ENCODE measurements at regions of chr14 and their contacts with region 1.

Region 1: DNA sequence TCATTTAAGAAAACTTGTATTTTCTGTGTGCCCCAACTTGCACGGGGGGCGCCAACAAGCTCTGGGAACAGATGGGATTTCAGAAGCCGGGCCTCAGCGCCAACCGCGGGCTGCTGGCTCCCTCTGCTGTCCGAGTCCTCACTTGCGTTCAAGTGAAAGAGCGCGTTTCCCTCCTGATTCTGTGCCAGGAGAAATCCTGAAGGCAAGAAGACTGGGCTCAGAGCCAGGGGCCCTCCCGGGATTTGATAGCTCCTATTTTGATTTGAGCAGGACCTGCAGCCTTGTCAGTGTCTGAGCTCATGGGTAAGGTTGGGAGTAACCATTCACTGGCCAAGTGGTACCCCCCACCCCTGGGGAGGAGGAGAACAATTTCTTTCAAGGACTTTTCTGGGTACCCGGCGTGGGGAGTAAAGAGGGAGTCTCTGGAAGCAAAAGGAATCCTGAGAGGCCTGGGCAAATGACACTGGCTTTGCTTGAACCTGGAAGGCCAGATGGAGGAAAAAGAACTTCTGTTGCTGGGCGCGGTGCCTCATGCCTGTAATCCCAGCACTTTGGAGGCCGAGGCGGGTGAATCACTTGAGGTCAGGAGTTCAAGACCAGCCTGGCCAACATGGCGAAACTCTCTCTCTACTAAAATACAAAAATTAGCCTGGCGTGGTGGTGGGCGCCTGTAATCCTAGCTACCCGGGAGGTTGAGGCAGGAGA is 179.0 kb upstream of the RGS6 start:
- DNase-seq: peak; percentile 26
- H3K4me3 ChIP-seq: no peak overlapping the region
- CTCF ChIP-seq: peak; percentile 91

Region 2: GRCh38 chr14:71103662-71104484 is 649.4 kb before region 1 on chr14:
- CTCF ChIA-PET with region 1: interaction called, 48 read pairs
- POLR2A ChIA-PET with region 1: no interaction called
- DNase-seq: no peak
- H3K4me3 ChIP-seq: no peak overlapping the region
- CTCF ChIP-seq: peak; percentile 66

Region 3: DNA sequence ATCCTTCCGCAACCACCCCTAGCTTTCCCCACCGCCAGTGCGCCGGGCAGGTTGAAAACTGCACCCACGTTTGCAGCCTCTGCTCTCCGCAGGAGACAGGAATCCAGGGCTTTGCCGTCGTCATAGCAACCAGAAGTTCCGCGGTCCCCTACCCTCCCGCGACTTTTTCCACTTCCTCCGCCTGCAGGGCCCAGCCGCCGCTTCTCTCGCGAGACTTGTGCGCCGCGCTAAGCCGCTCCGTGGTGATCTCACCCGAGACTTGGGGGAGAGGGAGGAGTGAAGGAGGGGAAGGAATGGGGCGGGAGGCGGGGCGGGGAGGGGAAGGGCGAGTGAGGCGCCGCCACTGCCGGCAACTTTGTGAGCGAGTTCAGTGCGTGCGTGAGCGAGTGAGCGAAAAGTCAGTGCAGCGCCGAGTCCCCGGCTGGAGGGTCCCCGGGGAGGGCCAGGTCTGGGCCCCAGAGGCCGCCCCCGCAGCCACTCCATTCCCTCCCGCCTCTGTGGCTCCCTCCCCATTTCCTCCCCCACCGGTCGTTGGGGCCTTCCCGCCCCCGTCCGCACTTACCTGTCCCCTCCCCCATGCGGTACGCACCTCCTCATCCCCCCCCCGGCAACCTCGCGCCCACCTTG is 433.1 kb before region 1 on chr14:
- CTCF ChIA-PET with region 1: interaction called, 10 read pairs
- POLR2A ChIA-PET with region 1: no interaction called
- DNase-seq: peak; percentile 91
- H3K4me3 ChIP-seq: peak within 1 kb of the TSS; percentile 87
- CTCF ChIP-seq: no peak

Region 4: GRCh38 chr14:71720978-71721624 is 32.2 kb before region 1 on chr14:
- CTCF ChIA-PET with region 1: interaction called, 224 read pairs
- POLR2A ChIA-PET with region 1: no interaction called
- DNase-seq: no peak
- H3K4me3 ChIP-seq: no peak overlapping the region
- CTCF ChIP-seq: peak; percentile 68

Region 5: DNA sequence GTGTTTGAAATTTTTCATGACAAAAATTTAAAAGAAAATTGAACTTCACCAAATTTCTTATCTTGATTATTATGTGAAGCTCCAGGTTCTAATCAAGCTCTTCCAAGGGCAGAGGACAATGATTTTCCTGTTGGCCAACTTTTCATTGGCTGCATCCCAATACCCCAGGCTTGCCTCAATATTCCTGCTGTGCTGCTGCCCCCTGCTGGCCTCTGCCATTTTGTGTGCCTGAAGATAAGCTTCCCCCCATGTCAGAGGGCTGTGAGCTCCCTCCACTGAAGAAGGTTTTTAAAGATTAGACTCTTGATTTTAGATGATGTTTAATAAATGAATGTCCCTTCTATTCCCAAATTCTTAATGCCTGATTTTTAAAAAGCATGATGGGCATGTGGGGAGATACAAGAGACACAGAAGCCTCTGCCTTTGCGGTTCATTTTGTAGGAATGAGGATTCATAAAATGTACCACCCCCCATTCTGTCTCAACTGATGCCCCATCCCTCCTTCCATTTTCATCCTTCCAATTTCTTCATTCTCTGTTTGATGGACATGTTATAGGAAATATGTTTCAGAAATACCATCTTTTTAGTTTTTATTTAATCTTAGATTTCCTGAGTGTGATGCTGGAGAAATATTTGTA is 102.2 kb after region 1 on chr14:
- CTCF ChIA-PET with region 1: interaction called, 13 read pairs
- POLR2A ChIA-PET with region 1: no interaction called
- DNase-seq: peak; percentile 4
- H3K4me3 ChIP-seq: no peak overlapping the region
- CTCF ChIP-seq: peak; percentile 83

Measured in AG04449 (cell line).